MCF 10A (cell line): ENCODE measurements at regions of chr2 and their contacts with region 1.

Region 1: DNA sequence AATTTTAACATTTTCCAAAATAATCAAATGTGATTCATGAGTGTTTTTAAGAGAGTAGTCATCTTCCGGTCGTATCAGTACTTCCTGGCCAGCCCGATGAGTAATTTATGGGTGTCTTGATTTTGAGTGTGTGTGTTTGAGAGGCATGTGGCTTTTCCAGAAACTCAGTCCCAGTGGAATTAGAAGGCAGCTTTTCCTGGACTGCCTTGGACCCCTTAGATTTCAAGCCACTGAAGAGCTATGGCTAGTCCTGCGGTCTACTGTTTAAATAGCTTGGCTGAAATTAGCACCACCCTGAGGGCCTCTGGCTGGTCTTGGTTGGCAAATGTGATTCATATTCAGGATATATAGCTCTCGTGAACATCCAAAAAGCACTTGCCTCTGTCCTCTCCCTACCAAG is 59.4 kb downstream of the HK2 start:
- DNase-seq: peak; percentile 63
- H3K4me3 Mint-ChIP-seq: no peak overlapping the region
- H3K27ac Mint-ChIP-seq: peak overlapping the region; percentile 52
- H3K4me1 Mint-ChIP-seq: peaks cover 10% of the 10 kb centered on the region
- H3K27me3 Mint-ChIP-seq: no peaks in the 10 kb centered on the region
- CTCF ChIP-seq: no peak

Region 2: GRCh38 chr2:74944987-74945787 is 51.9 kb after region 1 on chr2:
- CTCF ChIA-PET with region 1: no interaction called
- POLR2A ChIA-PET with region 1: no interaction called
- intact Hi-C with region 1: no loop called
- DNase-seq: no peak
- H3K4me3 Mint-ChIP-seq: no peak overlapping the region
- H3K27ac Mint-ChIP-seq: no peak overlapping the region
- H3K4me1 Mint-ChIP-seq: peaks cover 5% of the 10 kb centered on the region
- H3K27me3 Mint-ChIP-seq: no peaks in the 10 kb centered on the region
- CTCF ChIP-seq: no peak

Region 3: GRCh38 chr2:74958274-74959105 is 65.2 kb after region 1 on chr2 and contains the start of gene POLE4:
- CTCF ChIA-PET with region 1: interaction called, 3 read pairs
- POLR2A ChIA-PET with region 1: no interaction called
- intact Hi-C with region 1: loop called (anchors 5 kb)
- DNase-seq: peak; percentile 89
- H3K4me3 Mint-ChIP-seq: peak within 1 kb of the TSS; percentile 80
- H3K27ac Mint-ChIP-seq: peak within 1 kb of the TSS; percentile 68
- H3K4me1 Mint-ChIP-seq: peaks cover 16% of the 10 kb centered on the region
- H3K27me3 Mint-ChIP-seq: no peaks in the 10 kb centered on the region
- CTCF ChIP-seq: no peak
- total RNA-seq, gene POLE4: 117 and 133 TPM in 2 replicates

Region 4: DNA sequence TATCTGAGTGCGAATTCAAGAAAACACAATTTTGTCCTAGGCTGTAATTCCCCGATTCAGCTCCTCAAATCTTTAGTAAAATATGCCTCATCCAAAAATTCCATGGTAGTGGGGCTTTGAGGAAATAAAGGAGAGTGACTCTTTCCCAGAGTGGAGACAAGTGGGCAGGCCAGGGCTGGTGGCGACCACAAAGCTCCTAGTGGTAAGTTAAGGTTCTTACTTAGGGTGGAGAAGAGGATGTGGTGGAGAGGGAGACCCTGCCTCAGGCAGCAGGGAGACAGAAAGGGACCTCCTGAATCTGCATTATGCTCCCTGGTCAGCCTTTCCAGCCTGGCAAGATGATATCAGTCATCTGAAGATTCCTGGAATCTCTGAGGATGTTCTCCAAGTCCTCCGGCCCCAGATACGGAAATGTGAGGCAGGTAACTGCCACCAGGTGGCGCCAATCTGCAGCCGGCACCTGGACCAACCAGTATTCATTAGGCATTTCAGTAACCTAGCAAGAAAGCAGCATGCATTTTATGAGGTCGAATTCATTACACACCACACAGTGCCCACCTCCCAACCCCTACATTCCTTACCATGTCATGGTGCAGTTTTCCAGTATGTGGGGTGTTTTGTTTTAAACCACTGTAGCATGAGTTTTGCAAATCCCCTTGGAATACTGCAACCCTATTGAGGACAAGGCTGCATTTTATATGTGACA is 171.5 kb after region 1 on chr2:
- CTCF ChIA-PET with region 1: no interaction called
- POLR2A ChIA-PET with region 1: no interaction called
- intact Hi-C with region 1: no loop called
- DNase-seq: peak; percentile 66
- H3K4me3 Mint-ChIP-seq: no peak overlapping the region
- H3K27ac Mint-ChIP-seq: no peak overlapping the region
- H3K4me1 Mint-ChIP-seq: no peaks in the 10 kb centered on the region
- H3K27me3 Mint-ChIP-seq: no peaks in the 10 kb centered on the region
- CTCF ChIP-seq: peak; percentile 85